ENCODE measurements at regions of chr2 and their contacts with region 1.

Region 1: GRCh38 chr2:204325468-204325867 is 219.8 kb upstream of the PARD3B start:
- DNase-seq: peak; percentile 47 to 69 (median 68)
- H3K4me3 ChIP-seq: no peak overlapping the region
- H3K4me3 Mint-ChIP-seq: no peak overlapping the region
- H3K27ac ChIP-seq: no peak overlapping the region
- H3K27ac Mint-ChIP-seq: peak overlapping the region in 1 of 7 donors; percentile 50
- H3K4me1 ChIP-seq: no peaks in the 10 kb centered on the region
- H3K4me1 Mint-ChIP-seq: peaks cover 0 to 2% (median under 1%) of the 10 kb centered on the region in 4 donors
- H3K27me3 ChIP-seq: no peaks in the 10 kb centered on the region
- H3K27me3 Mint-ChIP-seq: peaks cover 2 to 15% of the 10 kb centered on the region in 2 donors

Region 2: DNA sequence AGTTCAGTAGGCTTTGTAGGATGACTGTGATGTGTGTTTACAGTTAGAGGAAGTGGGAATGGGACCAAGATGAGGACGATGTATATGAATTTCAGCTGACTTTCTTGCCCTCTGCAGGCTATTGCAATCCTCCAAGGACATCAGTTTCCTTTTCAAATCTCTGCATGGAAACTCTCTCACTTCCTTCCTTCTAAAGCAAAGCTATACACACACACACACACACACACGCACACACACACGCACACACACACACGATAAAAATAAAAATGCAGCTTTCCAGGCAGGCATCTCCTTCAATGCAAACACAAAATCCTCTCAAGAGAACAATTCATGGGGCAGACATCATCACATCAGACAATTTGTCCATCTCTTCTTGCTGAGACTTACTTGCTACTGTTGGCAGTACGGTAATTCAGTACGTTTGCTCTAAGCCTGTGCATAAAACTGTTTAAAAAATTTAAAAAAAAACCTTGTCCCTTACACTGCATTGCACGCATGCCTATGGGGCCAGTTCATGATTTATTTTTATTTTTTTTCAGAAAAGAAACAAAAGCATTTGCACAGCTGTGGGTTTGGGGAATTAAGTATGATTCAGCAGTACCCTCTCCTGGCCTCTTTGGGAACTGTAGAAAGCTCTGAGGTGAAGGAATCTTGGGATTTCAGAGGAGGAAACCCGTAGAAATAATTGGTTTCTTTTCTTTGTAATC is 416.1 kb before region 1 on chr2:
- CTCF ChIA-PET with region 1: no interaction called
- POLR2A ChIA-PET with region 1: no interaction called
- intact Hi-C with region 1: no loop called
- DNase-seq: peak in 4 of 5 donors; percentile 42 to 51 (median 48)
- H3K4me3 ChIP-seq: no peak overlapping the region
- H3K4me3 Mint-ChIP-seq: peak overlapping the region; percentile 9 to 80 (median 69)
- H3K27ac ChIP-seq: no peak overlapping the region
- H3K27ac Mint-ChIP-seq: peak overlapping the region in 3 of 7 donors; percentile 49 to 93 (median 68)
- H3K4me1 ChIP-seq: peaks cover 18% of the 10 kb centered on the region
- H3K4me1 Mint-ChIP-seq: peaks cover 6 to 25% (median 15%) of the 10 kb centered on the region in 4 donors
- H3K27me3 ChIP-seq: no peaks in the 10 kb centered on the region
- H3K27me3 Mint-ChIP-seq: no peaks in the 10 kb centered on the region

Region 3: GRCh38 chr2:204145791-204146190 is 179.7 kb before region 1 on chr2:
- CTCF ChIA-PET with region 1: no interaction called
- POLR2A ChIA-PET with region 1: no interaction called
- intact Hi-C with region 1: no loop called
- DNase-seq: peak in 2 of 5 donors; percentile 4
- H3K4me3 ChIP-seq: peak overlapping the region; percentile 25 to 40
- H3K4me3 Mint-ChIP-seq: peak overlapping the region; percentile 78 to 90 (median 85)
- H3K27ac ChIP-seq: no peak overlapping the region
- H3K27ac Mint-ChIP-seq: peak overlapping the region in 5 of 7 donors; percentile 17 to 91 (median 68)
- H3K4me1 ChIP-seq: peaks cover 11% of the 10 kb centered on the region
- H3K4me1 Mint-ChIP-seq: peaks cover 0 to 11% (median 9%) of the 10 kb centered on the region in 4 donors
- H3K27me3 ChIP-seq: no peaks in the 10 kb centered on the region
- H3K27me3 Mint-ChIP-seq: peaks cover 6 to 20% of the 10 kb centered on the region in 2 donors

Region 4: GRCh38 chr2:204533629-204534370 is 208.3 kb after region 1 on chr2:
- CTCF ChIA-PET with region 1: no interaction called
- POLR2A ChIA-PET with region 1: no interaction called
- intact Hi-C with region 1: no loop called
- DNase-seq: no peak
- H3K4me3 ChIP-seq: no peak overlapping the region
- H3K4me3 Mint-ChIP-seq: no peak overlapping the region
- H3K27ac ChIP-seq: no peak overlapping the region
- H3K27ac Mint-ChIP-seq: no peak overlapping the region
- H3K4me1 ChIP-seq: no peaks in the 10 kb centered on the region
- H3K4me1 Mint-ChIP-seq: no peaks in the 10 kb centered on the region
- H3K27me3 ChIP-seq: no peaks in the 10 kb centered on the region
- H3K27me3 Mint-ChIP-seq: no peaks in the 10 kb centered on the region

Region 5: DNA sequence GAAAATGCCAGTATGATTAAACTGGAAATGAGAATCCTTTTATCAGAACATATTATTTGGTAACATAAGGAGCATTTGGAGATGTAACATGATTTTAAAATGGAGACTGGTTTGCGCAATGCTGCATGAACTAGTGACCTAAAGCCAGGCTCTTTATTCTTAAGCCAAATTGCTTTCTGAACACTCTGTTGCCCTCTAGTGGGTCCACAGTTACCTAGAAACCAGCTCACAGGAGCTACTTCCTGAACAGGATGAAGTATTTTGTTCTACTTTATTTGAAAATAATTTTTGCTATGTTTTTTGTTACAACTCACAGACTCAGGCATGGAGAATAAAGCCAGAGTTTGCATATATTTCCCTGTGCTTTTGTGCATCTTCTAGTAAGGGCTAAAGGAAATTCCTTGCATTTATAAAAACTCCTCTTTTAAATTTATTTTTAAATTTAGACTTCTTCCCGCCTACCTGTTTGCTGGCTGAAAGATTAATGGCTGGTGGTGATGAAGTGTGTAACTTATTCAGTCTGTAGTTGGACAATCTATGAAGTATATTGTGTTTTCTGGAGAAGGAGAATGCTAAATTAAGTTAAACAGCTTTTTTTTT is 366.5 kb after region 1 on chr2:
- CTCF ChIA-PET with region 1: no interaction called
- POLR2A ChIA-PET with region 1: no interaction called
- intact Hi-C with region 1: loop called (anchors 1 kb)
- DNase-seq: peak in 3 of 5 donors; percentile 13 to 24 (median 20)
- H3K4me3 ChIP-seq: no peak overlapping the region
- H3K4me3 Mint-ChIP-seq: no peak overlapping the region
- H3K27ac ChIP-seq: no peak overlapping the region
- H3K27ac Mint-ChIP-seq: no peak overlapping the region
- H3K4me1 ChIP-seq: no peaks in the 10 kb centered on the region
- H3K4me1 Mint-ChIP-seq: peaks cover 0 to 11% (median 8%) of the 10 kb centered on the region in 4 donors
- H3K27me3 ChIP-seq: no peaks in the 10 kb centered on the region
- H3K27me3 Mint-ChIP-seq: peaks cover 0 to 1% of the 10 kb centered on the region in 2 donors

Region 6: DNA sequence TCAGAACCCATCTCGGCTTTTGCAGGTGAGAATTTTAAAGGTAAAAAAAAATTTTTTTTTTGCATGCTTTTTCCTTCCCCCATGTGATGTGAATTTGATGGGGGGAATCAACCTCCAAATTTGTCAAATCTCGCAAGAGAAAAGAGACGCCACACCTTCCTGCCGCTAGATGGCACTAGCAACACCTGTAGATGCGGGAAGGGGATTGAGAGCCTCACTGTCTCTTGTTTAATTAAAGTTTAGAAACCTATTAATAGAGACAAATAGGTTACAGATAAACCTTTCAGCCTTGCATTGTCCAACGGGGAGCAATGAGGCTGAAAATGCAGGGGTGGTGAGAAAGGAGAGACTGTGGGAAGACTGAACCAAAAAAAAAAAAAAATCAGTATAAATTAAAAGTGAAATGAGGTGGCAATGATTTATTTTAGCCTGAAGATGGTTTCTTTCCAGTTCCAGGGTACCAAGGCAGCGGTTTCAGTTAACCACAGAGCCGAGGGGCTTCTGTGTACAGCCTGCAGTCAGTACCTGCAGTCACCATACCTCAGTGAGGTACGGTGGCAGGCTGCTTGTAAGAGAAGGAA is 1441.4 kb after region 1 on chr2:
- CTCF ChIA-PET with region 1: no interaction called
- POLR2A ChIA-PET with region 1: no interaction called
- intact Hi-C with region 1: loop called (anchors 2 kb)
- DNase-seq: peak in 4 of 5 donors; percentile 13 to 32 (median 22)
- H3K4me3 ChIP-seq: no peak overlapping the region
- H3K4me3 Mint-ChIP-seq: peak overlapping the region in 1 of 8 donors; percentile 17
- H3K27ac ChIP-seq: no peak overlapping the region
- H3K27ac Mint-ChIP-seq: peak overlapping the region in 1 of 7 donors; percentile 23
- H3K4me1 ChIP-seq: no peaks in the 10 kb centered on the region
- H3K4me1 Mint-ChIP-seq: peaks cover 0 to 15% (median 3%) of the 10 kb centered on the region in 4 donors
- H3K27me3 ChIP-seq: no peaks in the 10 kb centered on the region
- H3K27me3 Mint-ChIP-seq: peaks cover 27 to 35% of the 10 kb centered on the region in 2 donors

Region 7: DNA sequence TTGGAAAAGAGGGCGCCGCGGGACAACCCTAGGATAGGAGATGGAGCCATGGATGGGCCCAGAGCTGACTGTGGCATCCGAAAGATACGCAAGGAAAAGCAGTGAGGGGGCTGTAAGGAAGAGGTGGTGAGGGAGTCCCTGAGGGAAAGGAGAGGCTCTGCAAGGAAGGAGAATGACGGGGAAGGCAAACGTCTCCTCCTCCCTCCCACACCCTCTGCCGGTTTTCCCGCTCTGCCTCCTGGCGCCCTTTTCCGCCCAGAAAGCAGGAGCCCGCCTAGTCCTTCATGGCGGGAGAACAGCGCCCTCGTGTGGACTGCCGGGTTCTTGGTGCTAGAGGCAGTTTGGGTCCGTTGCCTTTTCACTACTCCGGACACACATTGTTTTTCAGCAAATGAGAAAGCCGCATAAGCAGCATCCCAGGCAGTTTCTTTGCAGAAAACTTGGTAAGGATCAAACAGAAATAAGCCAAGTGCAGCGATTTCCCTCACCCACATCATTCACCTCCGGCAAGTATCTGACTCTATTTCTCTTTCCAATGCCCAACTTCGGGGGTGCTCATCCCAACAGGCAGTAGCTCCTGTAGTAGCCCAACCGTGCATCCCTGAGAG is 1560.1 kb after region 1 on chr2:
- CTCF ChIA-PET with region 1: no interaction called
- POLR2A ChIA-PET with region 1: no interaction called
- intact Hi-C with region 1: loop called (anchors 1 kb)
- DNase-seq: peak in 4 of 5 donors; percentile 18 to 40 (median 21)
- H3K4me3 ChIP-seq: no peak overlapping the region
- H3K4me3 Mint-ChIP-seq: no peak overlapping the region
- H3K27ac ChIP-seq: no peak overlapping the region
- H3K27ac Mint-ChIP-seq: no peak overlapping the region
- H3K4me1 ChIP-seq: no peaks in the 10 kb centered on the region
- H3K4me1 Mint-ChIP-seq: peaks cover 0 to 5% (median 3%) of the 10 kb centered on the region in 4 donors
- H3K27me3 ChIP-seq: no peaks in the 10 kb centered on the region
- H3K27me3 Mint-ChIP-seq: peaks cover 15 to 18% of the 10 kb centered on the region in 2 donors

Region 8: GRCh38 chr2:205947621-205948495 is 1622.4 kb after region 1 on chr2:
- CTCF ChIA-PET with region 1: interaction called, 22 read pairs
- POLR2A ChIA-PET with region 1: no interaction called
- intact Hi-C with region 1: loop called (anchors 1 kb)
- DNase-seq: peak in 4 of 5 donors; percentile 18 to 42 (median 33)
- H3K4me3 ChIP-seq: no peak overlapping the region
- H3K4me3 Mint-ChIP-seq: peak overlapping the region in 1 of 8 donors; percentile 23
- H3K27ac ChIP-seq: no peak overlapping the region
- H3K27ac Mint-ChIP-seq: no peak overlapping the region
- H3K4me1 ChIP-seq: no peaks in the 10 kb centered on the region
- H3K4me1 Mint-ChIP-seq: peaks cover 0 to 5% (median 0%) of the 10 kb centered on the region in 4 donors
- H3K27me3 ChIP-seq: no peaks in the 10 kb centered on the region
- H3K27me3 Mint-ChIP-seq: peaks cover 8 to 17% of the 10 kb centered on the region in 2 donors